HCT116 (cell line): ENCODE measurements at regions of chr7 and their contacts with region 1.

Region 1: DNA sequence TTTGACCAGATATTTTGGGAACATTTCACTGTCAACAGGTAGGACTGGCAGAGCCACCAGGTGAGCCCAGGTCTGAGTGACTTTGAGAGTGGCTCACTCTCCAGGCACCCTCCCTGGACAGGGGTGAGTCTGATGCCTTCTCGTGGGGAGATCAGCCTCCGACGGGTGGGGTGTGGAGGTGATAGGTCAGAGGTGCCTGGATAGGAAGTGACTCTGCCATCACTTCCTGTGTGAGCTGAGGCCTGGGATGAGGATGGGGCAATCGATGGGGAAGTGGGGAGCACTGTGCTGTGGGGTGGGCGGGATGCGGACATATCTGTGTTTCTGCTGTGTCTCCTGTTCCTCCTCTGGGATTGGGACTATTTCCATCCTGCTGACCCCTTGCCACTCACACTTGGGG is 34.6 kb downstream of the IFT22 start:
- DNase-seq: no peak
- ATAC-seq: no peak
- H3K4me3 ChIP-seq: no peak overlapping the region
- H3K27ac ChIP-seq: no peak overlapping the region
- H3K4me1 ChIP-seq: peaks cover 4 to 6% of the 10 kb centered on the region in 2 experiments; a peak in 2 of 4 replicates
- H3K27me3 ChIP-seq: no peaks in the 10 kb centered on the region
- CTCF ChIP-seq: no peak
- POLR2A ChIP-seq: no peak
- RAD21 ChIP-seq: no peak

Region 2: GRCh38 chr7:100896732-100897608 is 390.1 kb before region 1 on chr7:
- CTCF ChIA-PET with region 1: interaction called, 8 read pairs
- POLR2A ChIA-PET with region 1: interaction called, 3 read pairs
- RAD21 ChIA-PET with region 1: interaction called in 1 of 2 experiments, 3 read pairs
- intact Hi-C with region 1: loop called (anchors 2 kb)
- DNase-seq: no peak
- ATAC-seq: peak; percentile 61
- H3K4me3 ChIP-seq: peak overlapping the region in 1 of 2 experiments; percentile 56; a peak in 1 of 4 replicates
- H3K27ac ChIP-seq: no peak overlapping the region
- H3K4me1 ChIP-seq: peaks cover 6 to 31% of the 10 kb centered on the region in 2 experiments
- H3K27me3 ChIP-seq: no peaks in the 10 kb centered on the region; the same call in 1 of the 2 replicates
- CTCF ChIP-seq: peak in 2 of 3 experiments; percentile 74 to 82; a peak in 4 of 6 replicates
- POLR2A ChIP-seq: no peak
- RAD21 ChIP-seq: no peak

Region 3: GRCh38 chr7:100965723-100966541 is 321.1 kb before region 1 on chr7:
- CTCF ChIA-PET with region 1: interaction called, 3 read pairs
- POLR2A ChIA-PET with region 1: no interaction called
- RAD21 ChIA-PET with region 1: no interaction called
- intact Hi-C with region 1: loop called (anchors 2 kb)
- DNase-seq: peak; percentile 91
- ATAC-seq: peak; percentile 91
- H3K4me3 ChIP-seq: peak overlapping the region; percentile 58 to 63
- H3K27ac ChIP-seq: peak overlapping the region; percentile 61; the same call in 1 of the 2 replicates
- H3K4me1 ChIP-seq: peaks cover 6 to 23% of the 10 kb centered on the region in 2 experiments; a peak in 3 of 4 replicates
- H3K27me3 ChIP-seq: peaks cover 25% of the 10 kb centered on the region; the same call in 1 of the 2 replicates
- CTCF ChIP-seq: peak in 2 of 3 experiments; percentile 97 to 99; a peak in 4 of 6 replicates
- POLR2A ChIP-seq: no peak
- RAD21 ChIP-seq: no peak

Region 4: GRCh38 chr7:101077303-101078089 is 209.5 kb before region 1 on chr7:
- CTCF ChIA-PET with region 1: interaction called, 6 read pairs
- POLR2A ChIA-PET with region 1: no interaction called
- RAD21 ChIA-PET with region 1: no interaction called
- intact Hi-C with region 1: loop called (anchors 5 kb)
- DNase-seq: peak; percentile 68
- ATAC-seq: peak; percentile 98
- H3K4me3 ChIP-seq: no peak overlapping the region
- H3K27ac ChIP-seq: no peak overlapping the region
- H3K4me1 ChIP-seq: peaks cover 0 to 10% of the 10 kb centered on the region in 2 experiments; a peak in 2 of 4 replicates
- H3K27me3 ChIP-seq: no peaks in the 10 kb centered on the region
- CTCF ChIP-seq: peak; percentile 88 to 96 (median 95)
- POLR2A ChIP-seq: no peak
- RAD21 ChIP-seq: peak; percentile 94

Region 5: GRCh38 chr7:101217388-101218235 is 69.4 kb before region 1 on chr7 and contains the starts of genes PLOD3 and ZNHIT1:
- CTCF ChIA-PET with region 1: interaction called, 14 read pairs
- POLR2A ChIA-PET with region 1: no interaction called
- RAD21 ChIA-PET with region 1: interaction called in 1 of 2 experiments, 3 read pairs
- intact Hi-C with region 1: no loop called
- DNase-seq: peak; percentile 96
- ATAC-seq: peak; percentile 91
- H3K4me3 ChIP-seq: peak within 1 kb of the TSS; percentile 93 to 97
- H3K27ac ChIP-seq: peak within 1 kb of the TSS; percentile 91
- H3K4me1 ChIP-seq: peaks cover 0 to 21% of the 10 kb centered on the region in 2 experiments; a peak in 2 of 4 replicates
- H3K27me3 ChIP-seq: no peaks in the 10 kb centered on the region
- CTCF ChIP-seq: 0 out of 6 replicates have a peak, but pooled peaks of 1 of the 3 experiments have one; percentile 15
- POLR2A ChIP-seq: peak; percentile 51
- RAD21 ChIP-seq: no peak
- total RNA-seq, gene PLOD3: 83.7 TPM
- total RNA-seq, gene ZNHIT1: 69.4 TPM

Region 6: GRCh38 chr7:101244375-101245146 is 42.5 kb before region 1 on chr7 and contains the start of gene FIS1:
- CTCF ChIA-PET with region 1: interaction called, 15 read pairs
- POLR2A ChIA-PET with region 1: interaction called, 3 read pairs
- RAD21 ChIA-PET with region 1: no interaction called
- intact Hi-C with region 1: no loop called
- DNase-seq: peak; percentile 81
- ATAC-seq: peak; percentile 92
- H3K4me3 ChIP-seq: peak within 1 kb of the TSS; percentile 99 to 100
- H3K27ac ChIP-seq: peak within 1 kb of the TSS; percentile 89
- H3K4me1 ChIP-seq: peaks cover 14 to 22% of the 10 kb centered on the region in 2 experiments
- H3K27me3 ChIP-seq: no peaks in the 10 kb centered on the region
- CTCF ChIP-seq: peak in 2 of 3 experiments; percentile 84 to 87; a peak in 4 of 6 replicates
- POLR2A ChIP-seq: no peak
- RAD21 ChIP-seq: no peak
- total RNA-seq, gene FIS1: 114 TPM